Activated naive CD4-positive, alpha-beta T cell treated with anti-CD3 and anti-CD28 coated beads for 36 hours (primary cell): ENCODE measurements at regions of chr5 and their contacts with region 1.

Region 1: DNA sequence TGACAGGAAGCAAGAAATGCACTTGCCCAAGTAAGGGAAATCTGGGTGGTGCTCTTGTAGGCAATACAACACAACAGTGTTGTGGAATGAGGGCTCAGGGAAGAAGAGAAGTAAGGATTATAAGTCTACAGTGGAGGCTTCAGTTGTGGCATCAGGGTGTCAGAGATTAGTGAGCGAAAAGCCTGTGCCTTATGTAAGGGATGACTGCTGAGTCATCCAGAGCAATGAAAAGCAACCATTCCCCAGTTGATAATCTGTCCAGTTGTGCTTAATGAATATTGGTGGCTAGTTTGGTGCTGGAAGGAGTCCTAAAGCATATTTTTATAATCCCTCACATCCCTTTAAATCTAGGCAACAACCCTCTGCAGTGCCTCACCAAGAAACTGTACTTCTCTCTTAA is 42.0 kb downstream of the FBXO38 start:
- DNase-seq: no peak
- H3K4me3 Mint-ChIP-seq: no peak overlapping the region
- H3K27ac Mint-ChIP-seq: peak overlapping the region; percentile 4
- H3K4me1 Mint-ChIP-seq: peaks cover 15% of the 10 kb centered on the region
- H3K27me3 Mint-ChIP-seq: no peaks in the 10 kb centered on the region

Region 2: DNA sequence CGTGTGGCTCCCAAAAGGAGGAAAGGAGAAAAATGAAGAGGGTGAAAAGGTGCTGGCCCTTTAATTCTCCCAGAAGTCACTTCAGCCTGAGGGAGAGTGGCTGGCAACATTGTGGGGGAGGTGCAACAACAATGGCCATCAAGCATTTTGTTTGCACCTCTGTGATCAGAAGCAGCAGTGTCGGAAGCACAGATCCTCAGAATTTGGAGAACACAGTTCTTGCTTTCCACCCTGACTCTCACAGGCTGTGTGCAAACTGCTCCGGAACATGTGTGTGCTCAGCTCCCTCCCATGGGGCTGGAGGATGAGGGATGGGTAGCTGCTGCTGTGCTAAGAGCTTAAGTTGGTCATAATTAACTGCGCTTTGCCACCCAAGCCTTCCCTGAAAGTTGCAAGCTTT is 1043.0 kb before region 1 on chr5:
- CTCF ChIA-PET with region 1: no interaction called
- intact Hi-C with region 1: no loop called
- DNase-seq: no peak
- H3K4me3 Mint-ChIP-seq: no peak overlapping the region
- H3K27ac Mint-ChIP-seq: no peak overlapping the region
- H3K4me1 Mint-ChIP-seq: no peaks in the 10 kb centered on the region
- H3K27me3 Mint-ChIP-seq: no peaks in the 10 kb centered on the region

Region 3: GRCh38 chr5:148414833-148415232 is 11.0 kb before region 1 on chr5:
- CTCF ChIA-PET with region 1: interaction called, 3 read pairs
- intact Hi-C with region 1: loop called (anchors 2 kb)
- DNase-seq: no peak
- H3K4me3 Mint-ChIP-seq: no peak overlapping the region
- H3K27ac Mint-ChIP-seq: peak overlapping the region; percentile 30
- H3K4me1 Mint-ChIP-seq: no peaks in the 10 kb centered on the region
- H3K27me3 Mint-ChIP-seq: no peaks in the 10 kb centered on the region